Panc1 (cell line): ENCODE measurements at regions of chr20 and their contacts with region 1.

Region 1: DNA sequence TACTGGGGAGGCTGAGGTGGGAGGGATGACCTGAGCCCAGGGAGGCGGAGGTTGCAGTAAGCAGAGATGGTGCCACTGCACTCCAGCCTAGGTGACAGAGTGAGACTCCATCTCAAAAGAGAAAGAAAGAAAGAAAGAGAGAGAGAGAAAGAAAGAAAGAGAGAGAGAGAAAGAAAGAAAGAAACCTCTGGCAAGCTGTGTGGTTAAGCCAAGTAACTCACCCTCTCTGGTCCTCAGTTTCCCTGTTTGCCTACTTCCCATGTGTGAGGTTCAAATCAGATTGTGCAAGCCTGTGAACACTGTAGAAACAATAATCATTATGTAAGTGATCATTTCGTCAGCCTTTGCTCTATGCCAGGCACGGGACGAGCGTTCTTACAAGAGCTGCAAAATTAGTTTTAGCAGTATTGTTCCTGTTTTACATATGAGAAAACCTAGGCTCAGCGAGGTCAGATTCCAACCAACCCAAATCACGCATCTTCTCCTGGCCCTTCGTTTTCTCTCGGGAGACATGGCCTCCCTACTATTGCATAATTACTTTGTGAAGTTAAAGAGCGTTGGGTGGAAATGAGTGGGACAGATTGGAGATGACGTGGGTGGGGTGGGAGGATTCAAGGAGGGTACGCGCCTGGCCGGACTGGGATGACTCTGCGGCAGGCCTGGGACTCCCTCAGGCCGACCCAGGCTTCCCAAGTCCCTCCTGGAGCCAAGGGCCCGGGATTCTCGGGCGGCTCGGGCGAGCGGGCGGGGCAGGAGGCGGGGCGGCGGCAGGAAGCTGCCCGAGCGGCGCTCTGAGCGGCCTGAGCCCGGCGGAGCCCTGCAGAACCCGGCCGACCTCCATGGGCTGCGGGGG is at the start of gene SNX21:
- DNase-seq: no peak
- ATAC-seq: peak; percentile 97
- H3K4me3 ChIP-seq: peak within 1 kb of the TSS; percentile 65 to 67
- H3K27ac ChIP-seq: peak within 1 kb of the TSS; percentile 88
- H3K4me1 ChIP-seq: peaks cover 17% of the 10 kb centered on the region
- H3K27me3 ChIP-seq: no peaks in the 10 kb centered on the region
- CTCF ChIP-seq: no peak
- total RNA-seq, gene SNX21: 25.7 TPM

Region 2: GRCh38 chr20:45817652-45818194 is 15.5 kb before region 1 on chr20:
- CTCF ChIA-PET with region 1: interaction called, 13 read pairs
- POLR2A ChIA-PET with region 1: no interaction called
- in situ Hi-C with region 1: no loop called
- intact Hi-C with region 1: no loop called
- DNase-seq: no peak
- ATAC-seq: peak; percentile 16; the same call in 1 of the 2 replicates
- H3K4me3 ChIP-seq: no peak overlapping the region
- H3K27ac ChIP-seq: peak overlapping the region; percentile 26; the same call in 1 of the 2 replicates
- H3K4me1 ChIP-seq: peaks cover 35% of the 10 kb centered on the region
- H3K27me3 ChIP-seq: no peaks in the 10 kb centered on the region
- CTCF ChIP-seq: no peak